ENCODE measurements at regions of chr19 and their contacts with region 1.

Region 1: DNA sequence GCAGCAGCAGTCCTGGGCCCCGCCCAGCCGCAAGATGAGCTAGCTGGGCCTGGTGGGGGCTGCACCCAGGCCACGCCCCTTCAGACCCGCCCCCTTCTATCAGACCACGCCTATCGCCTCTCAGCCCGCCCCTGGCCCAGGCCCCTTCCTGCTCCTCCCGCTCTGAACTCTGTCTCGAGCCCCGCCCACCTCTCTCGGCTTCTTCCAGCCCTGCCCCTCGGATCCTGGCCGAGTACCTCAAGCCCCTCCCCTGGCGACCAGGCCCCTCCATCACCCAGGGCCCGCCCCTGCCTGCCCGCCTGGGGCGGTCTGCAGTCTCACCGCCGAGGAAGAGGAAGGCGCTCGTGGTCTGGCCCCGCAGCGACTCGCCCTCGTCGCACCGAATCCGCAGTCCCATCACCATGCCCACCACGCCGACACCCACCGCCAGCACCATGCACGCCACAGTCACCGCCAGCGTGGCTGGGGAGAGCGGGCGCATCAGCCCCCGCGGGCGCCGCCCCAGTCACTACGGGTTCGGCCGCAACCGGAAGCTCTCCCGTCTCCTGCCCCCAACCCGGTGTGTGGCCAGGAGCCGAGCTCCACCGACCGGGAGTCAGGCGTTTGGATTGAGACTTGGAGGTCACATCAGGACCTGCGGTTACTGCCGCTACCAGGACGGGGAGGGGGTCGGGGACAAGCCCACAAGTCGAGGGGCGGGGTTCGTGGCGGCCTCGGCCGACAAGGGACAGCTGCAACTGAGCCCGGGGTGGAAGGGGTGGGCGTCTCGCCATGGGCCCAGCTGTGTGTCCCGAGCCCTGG is 1.0 kb downstream of the CLDND2 start:
- DNase-seq: peak; percentile 99
- H3K4me3 Mint-ChIP-seq: peak overlapping the region; percentile 98
- H3K27ac Mint-ChIP-seq: peak overlapping the region; percentile 98
- H3K4me1 Mint-ChIP-seq: peaks cover 57% of the 10 kb centered on the region
- H3K27me3 Mint-ChIP-seq: no peaks in the 10 kb centered on the region

Region 2: DNA sequence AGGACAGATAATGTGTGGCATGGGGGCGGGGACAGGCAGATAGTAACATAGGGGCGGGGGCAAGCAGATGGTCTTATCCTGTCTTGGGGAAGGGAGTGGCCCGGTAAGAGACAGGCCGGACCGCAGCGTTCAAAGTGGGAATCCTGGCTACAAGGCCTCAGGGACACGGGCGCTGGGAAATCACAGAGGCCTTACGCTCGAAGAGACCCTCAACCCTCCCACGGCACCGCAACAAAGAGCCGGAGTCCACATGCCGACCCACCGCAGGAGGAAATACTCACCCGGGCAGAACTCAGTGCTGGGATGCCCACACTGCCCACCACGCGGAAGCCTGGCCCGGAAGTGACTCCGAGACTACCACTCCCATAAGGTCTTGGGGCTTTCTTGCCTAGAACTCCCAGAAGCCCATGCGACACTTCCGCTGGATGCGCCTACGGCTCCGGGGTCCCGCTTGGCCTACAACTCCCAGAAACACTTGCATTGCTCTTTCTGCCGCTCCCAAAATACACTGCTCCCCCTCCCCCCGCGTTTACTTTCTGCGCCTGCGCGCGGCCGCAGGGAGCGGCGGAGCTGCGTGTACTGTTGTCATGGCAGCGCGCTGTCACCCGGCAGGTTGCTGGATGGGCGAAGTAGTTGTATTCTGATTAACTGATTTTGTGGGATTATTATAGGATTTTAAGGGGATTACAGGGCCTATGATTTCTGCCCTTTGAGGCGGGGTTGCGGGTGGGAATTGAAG is 259.5 kb before region 1 on chr19 and contains the start of gene CTU1:
- intact Hi-C with region 1: loop called (anchors 5 kb)
- DNase-seq: peak; percentile 99
- H3K4me3 Mint-ChIP-seq: peak within 1 kb of the TSS; percentile 87
- H3K27ac Mint-ChIP-seq: peak within 1 kb of the TSS; percentile 93
- H3K4me1 Mint-ChIP-seq: peaks cover 24% of the 10 kb centered on the region
- H3K27me3 Mint-ChIP-seq: no peaks in the 10 kb centered on the region
- total RNA-seq, gene CTU1: 12.8 and 13.4 TPM in 2 replicates

Region 3: DNA sequence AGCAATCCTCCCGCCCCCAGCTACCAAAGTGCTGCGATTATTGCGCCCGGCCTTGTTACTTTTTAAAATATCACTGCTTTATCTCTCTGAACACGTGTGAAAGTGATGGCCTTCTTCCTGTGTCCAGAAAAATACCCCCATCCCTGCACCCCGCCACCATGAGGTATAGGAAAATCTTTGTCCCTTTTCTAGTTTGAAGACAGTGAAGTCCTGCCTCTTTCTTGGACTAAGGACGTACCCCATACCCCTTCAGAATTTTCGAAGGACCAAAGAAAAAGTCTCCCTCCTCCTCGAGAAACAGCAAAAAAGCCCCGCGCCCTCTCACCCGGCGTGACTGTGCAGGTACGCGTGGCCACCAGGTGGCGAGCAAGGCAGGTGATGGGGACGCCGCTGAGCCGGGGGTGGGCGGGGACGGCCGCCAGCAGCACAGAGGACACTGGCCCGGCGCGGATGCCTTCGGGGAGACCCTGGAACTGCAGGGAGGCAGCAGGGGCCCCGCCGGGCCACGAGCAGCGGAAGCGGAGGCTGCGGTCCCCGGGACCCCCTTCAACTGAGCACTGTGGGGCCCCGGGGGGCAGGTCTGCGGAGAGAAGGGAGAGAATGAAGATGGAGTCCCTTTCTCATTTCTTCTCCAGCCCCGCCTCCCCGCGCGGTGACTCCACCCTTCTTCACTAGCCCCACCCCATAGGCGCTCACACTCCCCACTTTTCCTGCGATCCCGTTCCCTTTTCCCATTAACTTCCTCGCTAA is 29.0 kb before region 1 on chr19:
- intact Hi-C with region 1: loop called (anchors 1 kb)
- DNase-seq: peak; percentile 95
- H3K4me3 Mint-ChIP-seq: peak overlapping the region; percentile 90
- H3K27ac Mint-ChIP-seq: peak overlapping the region; percentile 87
- H3K4me1 Mint-ChIP-seq: peaks cover 20% of the 10 kb centered on the region
- H3K27me3 Mint-ChIP-seq: peaks cover 6% of the 10 kb centered on the region

Region 4: GRCh38 chr19:51351266-51351990 is 16.3 kb before region 1 on chr19:
- intact Hi-C with region 1: no loop called
- DNase-seq: no peak
- H3K4me3 Mint-ChIP-seq: no peak overlapping the region
- H3K27ac Mint-ChIP-seq: no peak overlapping the region
- H3K4me1 Mint-ChIP-seq: peaks cover 6% of the 10 kb centered on the region
- H3K27me3 Mint-ChIP-seq: no peaks in the 10 kb centered on the region

Region 5: GRCh38 chr19:51460164-51460992 is 92.6 kb after region 1 on chr19:
- intact Hi-C with region 1: no loop called
- DNase-seq: no peak
- H3K4me3 Mint-ChIP-seq: no peak overlapping the region
- H3K27ac Mint-ChIP-seq: peak overlapping the region; percentile 60
- H3K4me1 Mint-ChIP-seq: peaks cover 10% of the 10 kb centered on the region
- H3K27me3 Mint-ChIP-seq: peaks cover 35% of the 10 kb centered on the region

Region 6: DNA sequence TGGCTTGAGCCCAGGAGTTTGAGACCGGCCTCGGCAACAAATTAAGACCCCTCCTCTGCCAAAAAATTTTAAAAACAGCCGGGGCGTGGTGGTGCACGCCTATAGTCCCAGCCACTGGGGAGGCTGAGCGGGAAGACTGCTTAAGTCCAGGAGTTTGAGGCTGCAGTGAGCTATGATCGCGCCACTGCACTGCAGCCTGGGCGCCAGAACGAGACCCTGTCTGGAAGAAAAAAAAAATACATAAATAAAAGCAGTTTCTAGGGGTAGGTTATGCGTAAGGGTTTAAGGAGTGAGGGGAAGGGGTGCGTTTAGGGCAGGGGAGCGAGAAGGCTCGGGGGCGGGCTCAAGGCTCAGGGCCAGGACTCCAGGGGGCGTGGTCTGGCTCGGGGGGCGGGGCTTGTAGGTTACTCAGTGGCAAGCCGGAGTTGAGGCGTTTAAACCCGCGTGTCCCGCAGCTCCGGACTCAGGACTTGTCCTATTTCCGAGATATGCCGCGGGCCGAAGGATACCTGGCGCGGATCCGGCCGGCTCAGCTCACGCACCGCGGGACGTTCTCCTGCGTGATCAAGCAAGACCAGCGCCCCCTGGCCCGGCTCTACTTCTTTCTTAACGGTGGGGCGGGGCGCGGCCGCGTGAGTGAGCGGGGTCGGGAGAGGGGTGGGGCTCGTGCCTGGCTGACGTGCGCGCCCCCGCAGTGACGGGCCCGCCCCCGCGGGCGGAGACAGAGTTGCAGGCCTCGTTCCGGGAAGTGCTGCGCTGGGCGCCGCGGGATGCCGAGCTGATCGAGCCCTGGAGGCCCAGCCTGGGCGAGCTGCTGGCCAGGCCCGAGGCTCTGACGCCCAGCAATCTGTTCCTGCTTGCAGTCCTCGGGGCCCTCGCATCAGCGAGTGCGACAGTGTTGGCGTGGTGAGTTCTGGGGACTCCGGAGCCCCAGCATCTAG is 336.1 kb after region 1 on chr19:
- intact Hi-C with region 1: loop called (anchors 1 kb)
- DNase-seq: peak; percentile 99
- H3K4me3 Mint-ChIP-seq: peak overlapping the region; percentile 90
- H3K27ac Mint-ChIP-seq: peak overlapping the region; percentile 95
- H3K4me1 Mint-ChIP-seq: peaks cover 24% of the 10 kb centered on the region
- H3K27me3 Mint-ChIP-seq: peaks cover 3% of the 10 kb centered on the region

Measured in activated CD4-positive, alpha-beta T cell treated with anti-CD3 and anti-CD28 coated beads, Interleukin-2, amount 10 ng/mL, durations not matched to agents 24 days and 14 days (primary cell).